Esophagus squamous epithelium (tissue), 5 donors: ENCODE measurements at regions of chr12 and their contacts with region 1.

Region 1: DNA sequence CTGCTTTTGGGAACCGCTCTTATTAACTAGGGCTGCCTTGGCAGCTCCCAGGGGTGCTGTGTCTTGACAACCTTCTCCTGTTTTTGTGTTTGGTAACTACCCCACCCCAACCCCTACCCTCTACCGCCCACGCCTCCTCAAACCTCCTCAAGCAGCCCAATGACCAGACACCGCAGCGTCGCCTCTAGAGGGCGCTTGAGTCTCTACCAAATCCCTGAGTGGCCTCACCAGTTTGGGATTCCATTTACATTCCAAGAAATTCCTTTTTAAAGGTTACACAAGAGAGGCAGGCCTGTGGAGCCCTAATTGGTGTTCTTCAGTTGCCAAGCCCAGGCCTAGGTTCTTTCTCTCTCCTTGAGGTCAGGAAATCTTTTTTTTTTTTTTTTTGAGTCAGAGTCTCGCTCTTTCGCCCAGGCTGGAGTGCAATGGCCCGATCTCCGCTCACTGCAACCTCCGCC is 72.3 kb upstream of the USP44 start:
- DNase-seq: no peak
- H3K4me3 ChIP-seq: no peak overlapping the region
- H3K27ac ChIP-seq: peak overlapping the region in 1 of 4 donors; percentile 21
- H3K4me1 ChIP-seq: peaks cover 0 to 28% (median 8%) of the 10 kb centered on the region in 3 donors
- H3K27me3 ChIP-seq: no peaks in the 10 kb centered on the region
- CTCF ChIP-seq: peak; percentile 14 to 80 (median 69)
- POLR2A ChIP-seq: no peak

Region 2: GRCh38 chr12:95385246-95386035 is 238.2 kb before region 1 on chr12:
- intact Hi-C with region 1: no loop called
- DNase-seq: no peak
- H3K4me3 ChIP-seq: peak overlapping the region in 3 of 4 donors; percentile 31 to 57 (median 32)
- H3K27ac ChIP-seq: peak overlapping the region; percentile 8 to 82 (median 78)
- H3K4me1 ChIP-seq: peaks cover 0 to 31% (median 5%) of the 10 kb centered on the region in 3 donors
- H3K27me3 ChIP-seq: peaks cover 0 to 8% (median 0%) of the 10 kb centered on the region in 4 donors
- CTCF ChIP-seq: no peak
- POLR2A ChIP-seq: no peak

Region 3: DNA sequence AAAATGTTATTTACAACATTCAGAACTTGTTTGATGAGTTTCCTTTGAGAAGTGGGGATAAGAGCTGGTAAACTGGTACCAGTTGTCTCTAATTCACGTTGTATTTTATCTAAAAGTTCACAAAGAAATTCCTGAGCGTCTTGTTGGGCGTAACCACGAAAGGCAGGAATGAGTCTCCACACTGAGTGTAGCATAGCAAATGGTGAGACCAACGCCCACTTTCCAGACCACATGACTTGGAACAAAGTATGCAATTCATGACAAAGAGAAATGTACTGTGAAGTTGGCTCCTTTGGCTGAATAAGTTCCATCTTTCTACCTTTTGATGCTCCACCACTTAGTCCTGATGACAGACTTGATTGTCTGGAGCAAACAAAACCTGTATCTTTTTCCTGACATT is 90.8 kb before region 1 on chr12:
- intact Hi-C with region 1: no loop called
- DNase-seq: no peak
- H3K4me3 ChIP-seq: no peak overlapping the region
- H3K27ac ChIP-seq: no peak overlapping the region
- H3K4me1 ChIP-seq: peaks cover 0 to 15% (median 0%) of the 10 kb centered on the region in 3 donors
- H3K27me3 ChIP-seq: no peaks in the 10 kb centered on the region
- CTCF ChIP-seq: no peak
- POLR2A ChIP-seq: no peak

Region 4: GRCh38 chr12:95810411-95810810 is 186.8 kb after region 1 on chr12:
- intact Hi-C with region 1: loop called (anchors 5 kb)
- DNase-seq: no peak
- H3K4me3 ChIP-seq: no peak overlapping the region
- H3K27ac ChIP-seq: no peak overlapping the region
- H3K4me1 ChIP-seq: peaks cover 1 to 18% (median 2%) of the 10 kb centered on the region in 3 donors
- H3K27me3 ChIP-seq: no peaks in the 10 kb centered on the region
- CTCF ChIP-seq: no peak
- POLR2A ChIP-seq: no peak